HEK293 (cell line): ENCODE measurements at regions of chr17 and their contacts with region 1.

Region 1: GRCh38 chr17:78186692-78187595 is at the starts of genes AFMID and TK1:
- H3K4me3 ChIP-seq: peak within 1 kb of the TSS; percentile 53
- H3K27ac ChIP-seq: peak within 1 kb of the TSS; percentile 72
- H3K4me1 ChIP-seq: peaks cover 2% of the 10 kb centered on the region
- CTCF ChIP-seq: peak; percentile 99

Region 2: DNA sequence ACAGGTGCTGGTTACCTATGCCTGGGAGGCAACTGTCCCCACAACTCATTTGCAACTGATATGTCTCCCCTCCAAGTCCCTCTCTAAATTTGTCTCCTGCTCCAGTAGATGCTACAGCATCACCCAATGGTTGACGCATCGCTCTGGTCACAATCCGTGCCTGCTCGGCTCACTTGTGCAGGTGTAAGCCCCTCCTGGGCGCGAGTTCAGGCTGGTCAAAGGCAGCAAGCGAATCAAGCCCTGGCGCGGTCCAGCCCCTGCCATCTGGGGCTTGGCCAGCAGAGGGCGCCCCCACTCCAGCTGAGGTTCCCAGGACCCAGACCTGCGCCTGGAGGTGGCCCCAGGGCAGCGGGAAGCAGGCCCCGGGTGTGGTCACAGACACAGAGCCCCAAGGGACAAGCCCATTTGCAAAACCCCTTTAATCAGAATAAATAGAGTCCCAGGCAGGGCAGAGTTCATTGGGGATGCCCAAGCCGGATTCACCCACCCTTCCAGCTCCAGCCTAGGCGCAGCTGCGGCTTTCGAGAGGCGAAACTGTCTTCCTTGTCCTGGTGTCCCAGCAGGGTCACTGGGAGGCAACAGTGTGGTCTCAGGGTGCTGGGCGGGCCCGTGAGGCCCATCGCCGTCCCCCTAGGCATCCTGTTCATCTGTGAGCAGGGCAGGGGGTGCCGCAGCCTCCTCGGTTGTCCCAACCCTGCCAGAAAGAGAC is 74.3 kb before region 1 on chr17:
- CTCF ChIA-PET with region 1: interaction called, 13 read pairs
- POLR2A ChIA-PET with region 1: interaction called, 6 read pairs
- H3K4me3 ChIP-seq: no peak overlapping the region
- H3K27ac ChIP-seq: no peak overlapping the region
- H3K4me1 ChIP-seq: no peaks in the 10 kb centered on the region
- CTCF ChIP-seq: peak; percentile 96

Region 3: GRCh38 chr17:78168242-78168902 is 18.6 kb before region 1 on chr17 and contains the start of gene SYNGR2:
- CTCF ChIA-PET with region 1: interaction called, 94 read pairs
- POLR2A ChIA-PET with region 1: interaction called, 48 read pairs
- H3K4me3 ChIP-seq: peak within 1 kb of the TSS; percentile 67
- H3K27ac ChIP-seq: peak within 1 kb of the TSS; percentile 78; the same call in 1 of the 2 replicates
- H3K4me1 ChIP-seq: no peaks in the 10 kb centered on the region; the same call in 1 of the 2 replicates
- CTCF ChIP-seq: 0 out of 2 replicates have a peak, but pooled peaks have one; percentile 17

Region 4: DNA sequence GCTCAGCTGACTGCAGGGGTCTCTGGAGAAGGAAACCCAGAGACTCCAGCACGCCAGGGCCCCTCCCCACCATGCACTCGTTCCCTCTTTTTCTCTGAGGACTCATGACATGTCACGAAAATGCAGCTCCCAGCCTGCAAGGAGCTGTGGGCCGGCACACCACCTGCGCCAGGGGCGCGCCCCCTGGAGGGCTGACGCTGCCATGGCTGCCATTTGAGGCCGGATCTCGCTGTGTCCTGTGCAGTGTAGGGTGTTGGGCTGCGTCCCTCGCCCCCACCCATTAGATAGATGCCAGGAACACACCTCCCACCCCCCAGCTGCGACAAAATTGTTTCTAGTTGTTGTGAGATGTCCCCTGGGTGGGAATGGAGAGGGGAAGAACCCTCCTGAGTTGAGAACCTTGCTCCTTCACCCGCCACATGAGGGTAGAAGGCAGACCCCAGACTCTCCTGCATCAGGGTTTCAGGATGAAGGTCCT is 10.4 kb before region 1 on chr17:
- CTCF ChIA-PET with region 1: interaction called, 94 read pairs
- POLR2A ChIA-PET with region 1: interaction called, 48 read pairs
- H3K4me3 ChIP-seq: no peak overlapping the region
- H3K27ac ChIP-seq: no peak overlapping the region
- H3K4me1 ChIP-seq: no peaks in the 10 kb centered on the region; the same call in 1 of the 2 replicates
- CTCF ChIP-seq: peak; percentile 90

Region 5: DNA sequence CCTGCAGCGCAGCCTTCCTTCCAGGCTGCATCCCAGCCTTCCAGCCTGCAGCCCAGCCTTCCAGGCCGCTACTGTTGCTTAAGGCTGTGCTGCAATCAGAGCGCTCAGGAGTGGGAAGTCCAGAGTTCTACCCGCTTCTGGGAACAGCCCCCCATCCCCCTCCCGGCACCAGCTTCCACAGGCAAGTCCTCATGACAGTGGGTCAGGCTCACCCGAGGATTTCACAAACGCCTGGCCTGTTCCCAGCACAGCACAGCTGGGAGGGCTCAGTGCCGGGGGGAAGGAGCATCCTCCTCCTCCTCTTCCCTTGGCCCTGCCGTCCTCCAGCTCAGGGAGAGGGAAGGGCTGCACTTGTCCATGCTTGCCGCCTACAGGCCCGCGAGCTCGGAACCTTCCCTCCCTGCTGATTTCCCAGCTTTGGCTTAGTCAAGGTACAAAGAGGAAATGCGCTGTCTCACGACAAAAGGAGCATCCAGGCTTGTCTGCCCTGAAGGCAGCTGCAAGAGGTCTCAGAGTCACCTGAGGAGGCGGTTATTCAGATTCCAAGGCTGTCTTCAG is 164.6 kb after region 1 on chr17:
- CTCF ChIA-PET with region 1: no interaction called
- POLR2A ChIA-PET with region 1: no interaction called
- H3K4me3 ChIP-seq: no peak overlapping the region
- H3K27ac ChIP-seq: no peak overlapping the region
- H3K4me1 ChIP-seq: peaks cover 14% of the 10 kb centered on the region
- CTCF ChIP-seq: no peak